WTC11 (cell line): ENCODE measurements at regions of chr9 and their contacts with region 1.

Region 1: DNA sequence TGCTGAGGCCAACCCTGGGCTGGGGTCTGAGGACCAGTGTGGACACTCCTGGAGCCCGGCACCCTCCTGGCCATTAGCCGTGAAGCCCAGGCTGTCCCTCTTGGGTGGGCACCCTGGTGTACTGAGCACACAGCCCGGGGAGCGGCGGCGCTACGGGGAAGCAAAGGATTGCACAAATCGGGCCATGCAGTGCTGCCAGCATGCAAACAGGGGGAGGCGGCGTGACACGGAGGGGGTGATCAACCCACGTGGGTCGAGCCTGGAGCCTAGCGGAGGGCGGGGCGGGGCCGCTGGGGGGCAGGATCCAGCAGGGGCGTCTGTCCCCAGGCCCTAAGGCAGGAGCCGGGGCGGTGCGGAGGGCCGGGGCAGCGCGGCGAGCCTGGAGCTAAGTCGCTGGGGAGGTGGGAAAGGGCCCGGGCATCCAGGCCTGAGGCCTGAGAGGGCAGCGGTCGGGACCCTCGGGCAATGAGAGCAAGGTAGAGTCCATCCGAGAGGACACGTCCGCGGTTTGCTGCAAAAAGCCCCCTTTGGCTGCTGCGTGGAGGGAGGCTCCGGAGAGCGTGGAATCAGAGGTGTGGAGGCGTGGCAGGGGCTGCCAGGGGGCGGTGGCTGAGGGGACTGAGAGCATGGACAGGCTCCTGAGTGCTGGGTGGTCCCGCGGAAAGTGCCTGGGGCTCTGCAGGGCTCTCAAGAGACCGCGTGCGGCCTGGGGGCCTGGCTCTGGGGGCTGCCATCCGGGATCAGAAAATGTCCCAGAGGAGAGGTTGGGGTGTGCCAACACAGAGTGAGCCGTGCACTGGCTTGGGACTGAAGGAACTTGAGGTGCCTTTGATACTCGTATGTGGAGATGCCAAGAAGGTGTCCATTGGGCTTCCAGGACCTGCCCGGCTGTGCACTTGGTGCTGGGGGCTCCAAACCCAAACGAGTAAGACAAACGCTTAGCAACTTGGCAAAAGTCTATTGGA is 94.2 kb downstream of the BARX1 start:
- DNase-seq: peak; percentile 40
- ATAC-seq: peak; percentile 12; the same call in 1 of the 2 replicates
- H3K4me3 Mint-ChIP-seq: peak overlapping the region; percentile 34; the same call in 1 of the 2 replicates
- H3K27ac Mint-ChIP-seq: no peak overlapping the region
- H3K4me1 Mint-ChIP-seq: peaks cover 27% of the 10 kb centered on the region
- H3K27me3 Mint-ChIP-seq: no peaks in the 10 kb centered on the region; the same call in 1 of the 2 replicates
- CTCF ChIP-seq: no peak

Region 2: GRCh38 chr9:93582115-93582514 is 278.9 kb before region 1 on chr9:
- CTCF ChIA-PET with region 1: no interaction called
- POLR2A ChIA-PET with region 1: interaction called, 11 read pairs
- DNase-seq: no peak
- ATAC-seq: peak; percentile 21
- H3K4me3 Mint-ChIP-seq: no peak overlapping the region
- H3K27ac Mint-ChIP-seq: no peak overlapping the region
- H3K4me1 Mint-ChIP-seq: peaks cover 31% of the 10 kb centered on the region
- H3K27me3 Mint-ChIP-seq: peaks cover 7% of the 10 kb centered on the region
- CTCF ChIP-seq: no peak

Region 3: DNA sequence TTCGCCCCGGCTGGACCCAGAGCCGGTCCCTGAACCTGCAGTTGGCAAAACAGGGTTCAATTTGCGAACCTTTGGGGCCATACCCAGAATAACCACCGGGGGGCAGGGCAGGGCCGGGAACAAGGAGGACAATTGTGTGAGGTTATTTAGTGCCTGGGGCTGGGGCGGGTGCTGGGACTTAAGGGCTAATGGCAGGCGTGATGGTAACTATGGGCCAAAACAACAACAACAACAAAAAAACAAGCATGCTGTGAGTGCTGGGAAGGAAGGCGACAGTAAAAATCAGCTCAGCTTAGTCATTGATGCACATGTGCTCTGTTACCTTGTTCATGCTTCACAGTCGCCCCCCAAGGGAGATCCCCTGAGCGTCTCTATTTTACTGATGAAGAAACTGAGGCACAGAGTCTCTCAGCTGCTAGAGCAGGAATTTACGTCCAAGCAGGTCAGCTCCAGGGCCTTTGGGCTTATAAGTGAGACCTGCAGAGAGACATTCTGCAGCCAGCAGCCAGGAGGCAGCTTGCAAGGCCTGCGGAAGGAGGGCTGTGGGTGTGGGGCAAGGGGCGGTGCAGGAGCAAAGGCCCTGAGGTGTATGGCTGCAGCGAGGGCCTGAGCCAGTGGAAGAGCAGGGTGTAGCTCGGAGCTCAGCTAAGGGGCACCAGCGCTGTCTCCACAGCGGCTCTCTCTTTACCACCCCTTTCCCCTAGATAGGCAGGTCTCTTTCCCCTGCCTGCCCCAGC is 178.6 kb before region 1 on chr9:
- CTCF ChIA-PET with region 1: interaction called, 15 read pairs
- POLR2A ChIA-PET with region 1: no interaction called
- DNase-seq: peak; percentile 94
- ATAC-seq: peak; percentile 76
- H3K4me3 Mint-ChIP-seq: no peak overlapping the region
- H3K27ac Mint-ChIP-seq: 0 out of 2 replicates have a peak overlapping the region, but pooled peaks have one; percentile 21
- H3K4me1 Mint-ChIP-seq: peaks cover 3% of the 10 kb centered on the region
- H3K27me3 Mint-ChIP-seq: no peaks in the 10 kb centered on the region
- CTCF ChIP-seq: peak; percentile 89

Region 4: GRCh38 chr9:93814077-93814956 is 46.7 kb before region 1 on chr9:
- CTCF ChIA-PET with region 1: interaction called, 11 read pairs
- POLR2A ChIA-PET with region 1: no interaction called
- DNase-seq: no peak
- ATAC-seq: peak; percentile 59
- H3K4me3 Mint-ChIP-seq: no peak overlapping the region
- H3K27ac Mint-ChIP-seq: no peak overlapping the region
- H3K4me1 Mint-ChIP-seq: peaks cover 37% of the 10 kb centered on the region
- H3K27me3 Mint-ChIP-seq: no peaks in the 10 kb centered on the region
- CTCF ChIP-seq: no peak

Region 5: GRCh38 chr9:93945400-93946337 is 84.7 kb after region 1 on chr9:
- CTCF ChIA-PET with region 1: interaction called, 26 read pairs
- POLR2A ChIA-PET with region 1: no interaction called
- DNase-seq: no peak
- ATAC-seq: no peak; the same call in 1 of the 2 replicates
- H3K4me3 Mint-ChIP-seq: peak overlapping the region; percentile 69
- H3K27ac Mint-ChIP-seq: no peak overlapping the region
- H3K4me1 Mint-ChIP-seq: peaks cover 58% of the 10 kb centered on the region
- H3K27me3 Mint-ChIP-seq: peaks cover 99% of the 10 kb centered on the region
- CTCF ChIP-seq: no peak

Region 6: GRCh38 chr9:93950619-93951601 is 89.9 kb after region 1 on chr9:
- CTCF ChIA-PET with region 1: interaction called, 10 read pairs
- POLR2A ChIA-PET with region 1: no interaction called
- DNase-seq: peak; percentile 62
- ATAC-seq: peak; percentile 2; the same call in 1 of the 2 replicates
- H3K4me3 Mint-ChIP-seq: peak overlapping the region; percentile 69
- H3K27ac Mint-ChIP-seq: no peak overlapping the region
- H3K4me1 Mint-ChIP-seq: peaks cover 67% of the 10 kb centered on the region
- H3K27me3 Mint-ChIP-seq: peaks cover 93% of the 10 kb centered on the region
- CTCF ChIP-seq: no peak